CD4-positive, alpha-beta T cell (primary cell): ENCODE measurements at regions of chr5 and their contacts with region 1.

Region 1: DNA sequence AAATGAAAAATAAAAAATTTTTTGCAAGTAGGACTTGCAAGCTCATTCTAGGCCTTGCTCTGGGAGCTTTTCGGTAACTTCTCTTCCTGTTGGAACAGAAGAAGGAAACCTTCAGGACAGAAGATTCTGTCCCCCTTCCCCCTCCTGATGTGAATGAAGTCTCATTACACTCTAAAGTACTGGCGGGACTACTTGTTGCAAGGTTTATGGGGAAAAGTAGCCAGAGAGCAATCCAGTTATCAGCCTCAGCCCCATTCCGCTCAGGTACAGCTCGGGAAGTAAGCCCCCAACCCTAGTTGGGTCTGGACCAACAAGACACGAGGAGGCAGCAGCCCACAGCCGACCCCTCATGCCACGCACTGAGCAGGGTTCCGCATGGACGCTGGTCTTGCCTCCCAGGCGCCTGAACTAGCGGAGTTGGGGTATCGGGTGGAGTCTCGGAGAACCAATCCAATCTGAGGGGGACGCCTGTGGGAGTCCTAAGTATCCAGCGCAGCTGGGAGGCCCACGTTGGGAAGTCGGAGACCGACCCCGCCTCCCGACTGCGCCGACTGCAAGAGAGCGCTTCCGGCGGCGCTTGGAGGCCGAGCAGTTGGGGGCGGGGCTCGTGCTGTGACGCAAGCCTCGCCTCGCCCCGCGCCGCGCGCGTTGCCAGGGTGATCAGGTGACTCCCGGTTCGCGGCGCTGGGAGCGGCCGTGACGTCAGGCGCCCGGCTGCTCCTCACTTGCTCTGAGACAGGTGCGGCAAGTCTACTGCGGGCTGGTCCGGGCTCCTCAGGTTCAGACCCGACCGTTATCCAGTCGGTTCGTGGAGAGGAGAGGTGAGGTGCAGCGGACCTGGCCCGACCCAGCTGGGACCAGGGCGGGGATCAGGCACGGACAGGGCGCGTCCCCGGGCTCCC is at the start of gene CYSTM1:
- DNase-seq: peak; percentile 90 to 99 (median 94)
- ATAC-seq: peak; percentile 91
- H3K4me3 ChIP-seq: peak within 1 kb of the TSS; percentile 66
- H3K4me3 Mint-ChIP-seq: peak within 1 kb of the TSS; percentile 95
- H3K27ac ChIP-seq: peak within 1 kb of the TSS; percentile 68 to 82
- H3K27ac Mint-ChIP-seq: peak within 1 kb of the TSS; percentile 96
- H3K4me1 ChIP-seq: peaks cover 17% of the 10 kb centered on the region
- H3K4me1 Mint-ChIP-seq: peaks cover 16% of the 10 kb centered on the region
- H3K27me3 ChIP-seq: no peaks in the 10 kb centered on the region
- H3K27me3 Mint-ChIP-seq: peaks cover 5% of the 10 kb centered on the region
- CTCF ChIP-seq: no peak
- total RNA-seq, gene CYSTM1: 7.2 to 7.4 TPM

Region 2: DNA sequence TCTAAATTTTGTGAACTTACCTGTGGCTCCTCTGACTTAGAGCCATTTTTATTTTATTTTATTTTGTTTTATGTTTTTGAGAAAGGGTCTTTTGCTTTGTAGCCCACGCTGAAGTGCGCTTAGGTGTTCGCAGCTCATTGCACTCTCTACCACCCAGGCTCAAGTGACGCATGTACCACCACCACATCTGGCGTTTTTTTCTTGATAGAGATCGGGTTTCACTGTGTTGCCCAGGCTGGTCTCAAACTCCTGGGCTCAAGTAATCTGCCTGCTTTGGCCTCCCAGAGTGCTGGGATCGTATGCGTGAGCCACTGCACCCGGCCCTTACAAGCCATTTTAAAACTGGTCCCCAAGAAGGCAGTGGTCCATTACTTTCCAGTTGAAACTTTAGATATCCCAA is 862.6 kb before region 1 on chr5:
- CTCF ChIA-PET with region 1: no interaction called
- POLR2A ChIA-PET with region 1: no interaction called
- intact Hi-C with region 1: no loop called
- DNase-seq: no peak
- ATAC-seq: no peak
- H3K4me3 ChIP-seq: no peak overlapping the region
- H3K4me3 Mint-ChIP-seq: peak overlapping the region; percentile 32
- H3K27ac ChIP-seq: no peak overlapping the region
- H3K27ac Mint-ChIP-seq: no peak overlapping the region
- H3K4me1 ChIP-seq: peaks cover 30% of the 10 kb centered on the region
- H3K4me1 Mint-ChIP-seq: peaks cover 78% of the 10 kb centered on the region
- H3K27me3 ChIP-seq: no peaks in the 10 kb centered on the region
- H3K27me3 Mint-ChIP-seq: no peaks in the 10 kb centered on the region
- CTCF ChIP-seq: no peak

Region 3: GRCh38 chr5:139844472-139845145 is 330.1 kb before region 1 on chr5:
- CTCF ChIA-PET with region 1: no interaction called
- POLR2A ChIA-PET with region 1: no interaction called
- intact Hi-C with region 1: loop called in 1 of 2 experiments (anchors 10 kb)
- DNase-seq: peak; percentile 45 to 81 (median 66)
- ATAC-seq: no peak
- H3K4me3 ChIP-seq: no peak overlapping the region
- H3K4me3 Mint-ChIP-seq: peak overlapping the region; percentile 74
- H3K27ac ChIP-seq: no peak overlapping the region
- H3K27ac Mint-ChIP-seq: no peak overlapping the region
- H3K4me1 ChIP-seq: peaks cover 15% of the 10 kb centered on the region
- H3K4me1 Mint-ChIP-seq: peaks cover 17% of the 10 kb centered on the region
- H3K27me3 ChIP-seq: peaks cover 12 to 21% of the 10 kb centered on the region in 2 experiments
- H3K27me3 Mint-ChIP-seq: peaks cover 38% of the 10 kb centered on the region
- CTCF ChIP-seq: peak; percentile 70

Region 4: GRCh38 chr5:140107312-140108083 is 67.2 kb before region 1 on chr5:
- CTCF ChIA-PET with region 1: no interaction called
- POLR2A ChIA-PET with region 1: interaction called, 13 read pairs
- intact Hi-C with region 1: loop called (anchors 2 kb)
- DNase-seq: peak; percentile 89 to 98 (median 93)
- ATAC-seq: peak; percentile 80
- H3K4me3 ChIP-seq: peak overlapping the region; percentile 76
- H3K4me3 Mint-ChIP-seq: peak overlapping the region; percentile 96
- H3K27ac ChIP-seq: peak overlapping the region; percentile 92 to 96
- H3K27ac Mint-ChIP-seq: peak overlapping the region; percentile 100
- H3K4me1 ChIP-seq: peaks cover 34% of the 10 kb centered on the region
- H3K4me1 Mint-ChIP-seq: peaks cover 59% of the 10 kb centered on the region
- H3K27me3 ChIP-seq: peaks cover 10 to 11% of the 10 kb centered on the region in 2 experiments
- H3K27me3 Mint-ChIP-seq: peaks cover 11% of the 10 kb centered on the region
- CTCF ChIP-seq: peak; percentile 23

Region 5: GRCh38 chr5:140113699-140114263 is 60.9 kb before region 1 on chr5 and contains the start of gene PURA:
- CTCF ChIA-PET with region 1: interaction called, 3 read pairs
- POLR2A ChIA-PET with region 1: interaction called, 13 read pairs
- intact Hi-C with region 1: loop called in 1 of 2 experiments (anchors 2 kb)
- DNase-seq: peak; percentile 95 to 98 (median 97)
- ATAC-seq: peak; percentile 93
- H3K4me3 ChIP-seq: peak within 1 kb of the TSS; percentile 84
- H3K4me3 Mint-ChIP-seq: peak within 1 kb of the TSS; percentile 100
- H3K27ac ChIP-seq: peak within 1 kb of the TSS; percentile 82 to 83
- H3K27ac Mint-ChIP-seq: peak within 1 kb of the TSS; percentile 96
- H3K4me1 ChIP-seq: peaks cover 40% of the 10 kb centered on the region
- H3K4me1 Mint-ChIP-seq: peaks cover 90% of the 10 kb centered on the region
- H3K27me3 ChIP-seq: peaks cover 8 to 10% of the 10 kb centered on the region in 2 experiments
- H3K27me3 Mint-ChIP-seq: peaks cover 6% of the 10 kb centered on the region
- CTCF ChIP-seq: no peak
- total RNA-seq, gene PURA: 7.0 to 7.9 TPM

Region 6: DNA sequence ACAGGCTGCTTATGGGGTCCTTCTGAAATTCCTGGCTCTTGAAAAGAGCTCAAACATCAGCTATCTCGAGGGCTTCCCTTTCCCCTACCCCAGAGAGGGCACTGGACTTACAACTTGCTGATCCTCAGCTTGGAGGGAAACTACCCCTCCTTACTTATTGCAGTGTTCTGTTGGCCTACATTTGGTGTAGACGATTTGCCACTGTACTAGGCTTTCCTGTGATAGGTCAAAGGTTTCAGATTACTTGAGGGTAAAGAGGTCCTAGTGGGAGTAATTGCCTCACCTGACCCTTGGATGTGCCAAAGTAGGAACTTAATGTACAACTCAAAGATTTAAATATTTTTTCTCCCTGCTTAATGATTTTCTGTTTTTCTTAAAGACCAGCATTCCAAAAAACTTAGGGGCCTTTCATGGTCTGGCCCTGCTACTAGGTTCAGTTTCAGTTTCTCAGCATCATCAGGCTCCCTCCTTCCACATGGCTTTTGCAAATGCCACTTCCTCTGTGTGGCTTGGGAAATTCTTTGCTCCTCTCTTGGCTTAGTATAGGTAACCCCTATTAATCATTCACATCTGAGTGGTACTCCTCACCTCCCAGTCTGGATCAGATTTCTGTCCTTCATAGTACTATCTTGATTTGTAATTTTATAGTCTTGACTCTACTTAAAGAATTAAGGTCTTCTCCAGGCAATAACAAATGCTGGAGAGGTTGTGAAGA is 32.7 kb after region 1 on chr5:
- CTCF ChIA-PET with region 1: no interaction called
- POLR2A ChIA-PET with region 1: no interaction called
- intact Hi-C with region 1: no loop called
- DNase-seq: no peak
- ATAC-seq: no peak
- H3K4me3 ChIP-seq: no peak overlapping the region
- H3K4me3 Mint-ChIP-seq: no peak overlapping the region
- H3K27ac ChIP-seq: no peak overlapping the region
- H3K27ac Mint-ChIP-seq: no peak overlapping the region
- H3K4me1 ChIP-seq: no peaks in the 10 kb centered on the region
- H3K4me1 Mint-ChIP-seq: no peaks in the 10 kb centered on the region
- H3K27me3 ChIP-seq: no peaks in the 10 kb centered on the region
- H3K27me3 Mint-ChIP-seq: no peaks in the 10 kb centered on the region
- CTCF ChIP-seq: no peak

Region 7: GRCh38 chr5:140292212-140293040 is 117.7 kb after region 1 on chr5:
- CTCF ChIA-PET with region 1: no interaction called
- POLR2A ChIA-PET with region 1: no interaction called
- intact Hi-C with region 1: no loop called
- DNase-seq: no peak
- ATAC-seq: no peak
- H3K4me3 ChIP-seq: no peak overlapping the region
- H3K4me3 Mint-ChIP-seq: no peak overlapping the region
- H3K27ac ChIP-seq: no peak overlapping the region
- H3K27ac Mint-ChIP-seq: no peak overlapping the region
- H3K4me1 ChIP-seq: no peaks in the 10 kb centered on the region
- H3K4me1 Mint-ChIP-seq: peaks cover 83% of the 10 kb centered on the region
- H3K27me3 ChIP-seq: no peaks in the 10 kb centered on the region
- H3K27me3 Mint-ChIP-seq: no peaks in the 10 kb centered on the region
- CTCF ChIP-seq: no peak

Region 8: DNA sequence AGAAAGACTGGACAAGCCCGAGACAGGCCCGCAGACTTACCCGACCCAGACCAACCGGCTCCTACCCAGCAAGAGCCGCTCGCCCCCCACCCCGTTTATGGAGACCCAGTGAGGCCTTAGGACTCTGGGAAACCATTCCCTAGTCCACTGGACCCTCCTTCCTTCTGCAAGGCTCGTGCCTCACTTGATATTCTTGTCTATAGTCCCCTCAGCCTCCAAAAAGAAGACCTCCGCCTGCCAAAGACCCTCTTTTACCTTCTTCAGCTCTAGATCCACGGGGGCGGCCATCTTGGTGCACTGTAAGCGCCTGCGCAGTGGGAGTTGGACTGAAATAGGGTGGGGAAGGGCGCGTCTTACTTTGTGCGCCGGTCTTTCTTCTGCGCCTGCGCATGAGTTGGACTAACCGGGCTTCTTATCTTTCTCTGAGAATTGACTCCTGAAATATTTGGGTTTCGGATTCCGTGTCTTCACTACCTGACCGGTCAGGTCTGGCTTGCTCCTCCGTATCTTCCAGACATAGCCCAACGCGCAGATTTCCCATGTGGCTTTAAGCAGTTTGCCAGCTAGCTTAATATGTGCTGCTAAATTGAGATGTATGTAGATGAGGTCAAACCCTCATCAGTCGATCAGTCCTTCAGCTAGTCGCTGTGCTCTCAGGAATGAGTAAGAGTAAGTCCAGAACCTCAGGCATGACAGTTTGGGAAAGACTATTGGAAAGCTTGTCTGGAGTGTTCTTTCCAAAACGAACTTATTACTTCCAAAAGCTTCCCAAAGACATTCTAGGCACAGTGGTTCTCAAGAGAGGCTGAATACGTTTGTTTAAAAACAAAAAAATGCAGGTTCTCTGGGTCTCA is 128.3 kb after region 1 on chr5 and contains the start of gene PFDN1:
- CTCF ChIA-PET with region 1: no interaction called
- POLR2A ChIA-PET with region 1: no interaction called
- intact Hi-C with region 1: loop called in 1 of 2 experiments (anchors 5 kb)
- DNase-seq: peak; percentile 79 to 97 (median 88)
- ATAC-seq: peak; percentile 99
- H3K4me3 ChIP-seq: peak within 1 kb of the TSS; percentile 73
- H3K4me3 Mint-ChIP-seq: peak within 1 kb of the TSS; percentile 97
- H3K27ac ChIP-seq: peak within 1 kb of the TSS; percentile 38 to 42
- H3K27ac Mint-ChIP-seq: peak within 1 kb of the TSS; percentile 92
- H3K4me1 ChIP-seq: peaks cover 14% of the 10 kb centered on the region
- H3K4me1 Mint-ChIP-seq: peaks cover 30% of the 10 kb centered on the region
- H3K27me3 ChIP-seq: no peaks in the 10 kb centered on the region
- H3K27me3 Mint-ChIP-seq: no peaks in the 10 kb centered on the region
- CTCF ChIP-seq: no peak
- total RNA-seq, gene PFDN1: 21.3 to 22.0 TPM

Region 9: DNA sequence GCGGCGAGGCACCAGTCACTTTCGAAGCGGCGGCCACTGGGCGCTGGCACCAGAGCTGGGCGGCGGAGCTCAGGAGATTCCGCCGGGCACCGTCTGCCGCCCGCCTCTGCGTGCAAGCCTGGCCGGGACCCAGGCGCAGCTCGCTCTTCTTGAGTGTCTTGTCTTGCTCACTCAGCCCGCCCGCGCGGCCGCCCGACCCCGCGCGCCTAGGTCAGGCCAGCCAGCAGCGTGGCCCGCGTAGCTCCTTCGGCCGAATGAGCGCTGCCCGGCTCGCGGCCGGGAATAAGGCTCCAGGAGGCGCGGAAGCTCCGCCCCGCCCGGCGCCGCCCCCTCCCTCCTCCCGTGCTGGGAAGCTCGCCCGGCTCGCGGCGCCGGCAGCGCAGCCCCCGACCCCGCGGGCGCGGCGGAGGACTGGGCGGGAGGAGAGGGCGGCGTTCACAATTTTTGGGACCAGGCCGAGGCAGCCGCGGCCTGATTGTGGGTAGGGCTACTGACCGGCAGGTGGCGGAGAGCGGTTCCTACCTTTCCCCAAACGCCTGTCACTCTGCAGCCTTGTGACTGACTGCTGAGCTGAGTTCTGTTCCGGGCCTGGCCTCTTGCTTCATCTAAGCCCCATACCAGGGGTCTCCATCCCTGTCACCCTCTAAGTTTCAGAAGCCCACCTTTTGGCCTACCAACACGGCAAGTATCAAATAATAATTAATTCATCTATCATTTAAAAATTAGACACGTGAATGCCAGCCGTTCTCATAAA is 171.8 kb after region 1 on chr5 and contains the start of gene HBEGF:
- CTCF ChIA-PET with region 1: no interaction called
- POLR2A ChIA-PET with region 1: no interaction called
- intact Hi-C with region 1: loop called in 1 of 2 experiments (anchors 5 kb)
- DNase-seq: peak in 13 of 14 experiments; percentile 11 to 72 (median 46)
- ATAC-seq: peak; percentile 67
- H3K4me3 ChIP-seq: peak within 1 kb of the TSS; percentile 56
- H3K4me3 Mint-ChIP-seq: peak within 1 kb of the TSS; percentile 83
- H3K27ac ChIP-seq: no peak within 1 kb of the TSS
- H3K27ac Mint-ChIP-seq: peak within 1 kb of the TSS; percentile 1
- H3K4me1 ChIP-seq: peaks cover 49% of the 10 kb centered on the region
- H3K4me1 Mint-ChIP-seq: peaks cover 50% of the 10 kb centered on the region
- H3K27me3 ChIP-seq: peaks cover 0 to 4% of the 10 kb centered on the region in 2 experiments
- H3K27me3 Mint-ChIP-seq: peaks cover 4% of the 10 kb centered on the region
- CTCF ChIP-seq: peak; percentile 30
- total RNA-seq, gene HBEGF: 3.6 to 4.2 TPM

Region 10: GRCh38 chr5:140700177-140701144 is 525.7 kb after region 1 on chr5 and contains the start of gene ZMAT2:
- CTCF ChIA-PET with region 1: no interaction called
- POLR2A ChIA-PET with region 1: no interaction called
- intact Hi-C with region 1: loop called in 1 of 2 experiments (anchors 5 kb)
- DNase-seq: peak; percentile 84 to 98 (median 90)
- ATAC-seq: peak; percentile 98
- H3K4me3 ChIP-seq: peak within 1 kb of the TSS; percentile 96
- H3K4me3 Mint-ChIP-seq: peak within 1 kb of the TSS; percentile 96
- H3K27ac ChIP-seq: peak within 1 kb of the TSS; percentile 64 to 90
- H3K27ac Mint-ChIP-seq: peak within 1 kb of the TSS; percentile 85
- H3K4me1 ChIP-seq: peaks cover 13% of the 10 kb centered on the region
- H3K4me1 Mint-ChIP-seq: peaks cover 31% of the 10 kb centered on the region
- H3K27me3 ChIP-seq: no peaks in the 10 kb centered on the region
- H3K27me3 Mint-ChIP-seq: no peaks in the 10 kb centered on the region
- CTCF ChIP-seq: no peak
- total RNA-seq, gene ZMAT2: 29.0 to 32.3 TPM

Region 11: GRCh38 chr5:140966293-140967225 is 791.8 kb after region 1 on chr5 and contains the start of gene PCDHAC2:
- CTCF ChIA-PET with region 1: no interaction called
- POLR2A ChIA-PET with region 1: no interaction called
- intact Hi-C with region 1: no loop called
- DNase-seq: no peak
- ATAC-seq: no peak
- H3K4me3 ChIP-seq: no peak within 1 kb of the TSS
- H3K4me3 Mint-ChIP-seq: no peak within 1 kb of the TSS
- H3K27ac ChIP-seq: no peak within 1 kb of the TSS
- H3K27ac Mint-ChIP-seq: no peak within 1 kb of the TSS
- H3K4me1 ChIP-seq: no peaks in the 10 kb centered on the region
- H3K4me1 Mint-ChIP-seq: no peaks in the 10 kb centered on the region
- H3K27me3 ChIP-seq: peaks cover 20 to 24% of the 10 kb centered on the region in 2 experiments
- H3K27me3 Mint-ChIP-seq: peaks cover 72% of the 10 kb centered on the region
- CTCF ChIP-seq: no peak
- total RNA-seq, gene PCDHAC2: not detected